ENCODE measurements at regions of chr20 and their contacts with region 1.

Region 1: GRCh38 chr20:59087829-59088433 is 45.3 kb upstream of the PRELID3B start:
- DNase-seq: peak; percentile 73 to 94 (median 84)
- ATAC-seq: peak; percentile 87
- H3K4me3 ChIP-seq: no peak overlapping the region
- H3K4me3 Mint-ChIP-seq: no peak overlapping the region
- H3K27ac ChIP-seq: no peak overlapping the region
- H3K27ac Mint-ChIP-seq: no peak overlapping the region
- H3K4me1 ChIP-seq: peaks cover 4% of the 10 kb centered on the region
- H3K4me1 Mint-ChIP-seq: peaks cover 11% of the 10 kb centered on the region
- H3K27me3 ChIP-seq: no peaks in the 10 kb centered on the region
- H3K27me3 Mint-ChIP-seq: no peaks in the 10 kb centered on the region
- CTCF ChIP-seq: peak; percentile 88

Region 2: GRCh38 chr20:59064214-59064722 is 23.7 kb before region 1 on chr20:
- CTCF ChIA-PET with region 1: interaction called, 12 read pairs
- POLR2A ChIA-PET with region 1: no interaction called
- intact Hi-C with region 1: no loop called
- DNase-seq: no peak
- ATAC-seq: no peak
- H3K4me3 ChIP-seq: no peak overlapping the region
- H3K4me3 Mint-ChIP-seq: no peak overlapping the region
- H3K27ac ChIP-seq: no peak overlapping the region
- H3K27ac Mint-ChIP-seq: no peak overlapping the region
- H3K4me1 ChIP-seq: no peaks in the 10 kb centered on the region
- H3K4me1 Mint-ChIP-seq: no peaks in the 10 kb centered on the region
- H3K27me3 ChIP-seq: no peaks in the 10 kb centered on the region
- H3K27me3 Mint-ChIP-seq: peaks cover 4% of the 10 kb centered on the region
- CTCF ChIP-seq: no peak

Region 3: GRCh38 chr20:59120491-59120890 is 32.6 kb after region 1 on chr20:
- CTCF ChIA-PET with region 1: interaction called, 31 read pairs
- POLR2A ChIA-PET with region 1: interaction called, 5 read pairs
- intact Hi-C with region 1: loop called in 1 of 2 experiments (anchors 5 kb)
- DNase-seq: peak in 6 of 9 experiments; percentile 16 to 82 (median 42)
- ATAC-seq: no peak
- H3K4me3 ChIP-seq: no peak overlapping the region
- H3K4me3 Mint-ChIP-seq: peak overlapping the region; percentile 61
- H3K27ac ChIP-seq: peak overlapping the region; percentile 77 to 87
- H3K27ac Mint-ChIP-seq: peak overlapping the region; percentile 98
- H3K4me1 ChIP-seq: peaks cover 84% of the 10 kb centered on the region
- H3K4me1 Mint-ChIP-seq: peaks cover 89% of the 10 kb centered on the region
- H3K27me3 ChIP-seq: no peaks in the 10 kb centered on the region
- H3K27me3 Mint-ChIP-seq: no peaks in the 10 kb centered on the region
- CTCF ChIP-seq: no peak

Region 4: GRCh38 chr20:59159493-59160376 is 71.8 kb after region 1 on chr20:
- CTCF ChIA-PET with region 1: interaction called, 23 read pairs
- POLR2A ChIA-PET with region 1: interaction called, 9 read pairs
- intact Hi-C with region 1: loop called in 1 of 2 experiments (anchors 5 kb)
- DNase-seq: peak; percentile 56 to 97 (median 79)
- ATAC-seq: peak; percentile 86
- H3K4me3 ChIP-seq: peak overlapping the region; percentile 47 to 67
- H3K4me3 Mint-ChIP-seq: peak overlapping the region; percentile 83
- H3K27ac ChIP-seq: peak overlapping the region; percentile 79 to 93
- H3K27ac Mint-ChIP-seq: peak overlapping the region; percentile 98
- H3K4me1 ChIP-seq: peaks cover 69% of the 10 kb centered on the region
- H3K4me1 Mint-ChIP-seq: peaks cover 91% of the 10 kb centered on the region
- H3K27me3 ChIP-seq: no peaks in the 10 kb centered on the region
- H3K27me3 Mint-ChIP-seq: no peaks in the 10 kb centered on the region
- CTCF ChIP-seq: peak; percentile 23

Region 5: GRCh38 chr20:59185809-59186208 is 97.9 kb after region 1 on chr20:
- CTCF ChIA-PET with region 1: interaction called, 15 read pairs
- POLR2A ChIA-PET with region 1: no interaction called
- intact Hi-C with region 1: no loop called
- DNase-seq: peak in 1 of 9 experiments; percentile 9
- ATAC-seq: no peak
- H3K4me3 ChIP-seq: no peak overlapping the region
- H3K4me3 Mint-ChIP-seq: no peak overlapping the region
- H3K27ac ChIP-seq: peak overlapping the region in 1 of 2 experiments; percentile 47
- H3K27ac Mint-ChIP-seq: no peak overlapping the region
- H3K4me1 ChIP-seq: peaks cover 29% of the 10 kb centered on the region
- H3K4me1 Mint-ChIP-seq: peaks cover 68% of the 10 kb centered on the region
- H3K27me3 ChIP-seq: no peaks in the 10 kb centered on the region
- H3K27me3 Mint-ChIP-seq: no peaks in the 10 kb centered on the region
- CTCF ChIP-seq: no peak

Region 6: GRCh38 chr20:59222253-59223181 is 134.6 kb after region 1 on chr20:
- CTCF ChIA-PET with region 1: interaction called, 36 read pairs
- POLR2A ChIA-PET with region 1: interaction called, 4 read pairs
- intact Hi-C with region 1: loop called (anchors 1 kb)
- DNase-seq: peak; percentile 64 to 89 (median 82)
- ATAC-seq: peak; percentile 94
- H3K4me3 ChIP-seq: peak overlapping the region; percentile 39 to 50
- H3K4me3 Mint-ChIP-seq: peak overlapping the region; percentile 78
- H3K27ac ChIP-seq: peak overlapping the region in 1 of 2 experiments; percentile 31
- H3K27ac Mint-ChIP-seq: peak overlapping the region; percentile 88
- H3K4me1 ChIP-seq: peaks cover 18% of the 10 kb centered on the region
- H3K4me1 Mint-ChIP-seq: peaks cover 34% of the 10 kb centered on the region
- H3K27me3 ChIP-seq: no peaks in the 10 kb centered on the region
- H3K27me3 Mint-ChIP-seq: no peaks in the 10 kb centered on the region
- CTCF ChIP-seq: peak; percentile 96

Measured in CD8-positive, alpha-beta T cell (primary cell).